Tibial artery (tissue), 4 donors: ENCODE measurements at regions of chr4 and their contacts with region 1.

Region 1: GRCh38 chr4:38319456-38320342 is 344.3 kb upstream of the KLF3 start:
- DNase-seq: peak; percentile 97 to 98
- H3K4me3 ChIP-seq: peak overlapping the region; percentile 30 to 47
- H3K27ac ChIP-seq: peak overlapping the region; percentile 67 to 68
- H3K4me1 ChIP-seq: peaks cover 0 to 33% (median 13%) of the 10 kb centered on the region in 4 donors
- H3K27me3 ChIP-seq: no peaks in the 10 kb centered on the region
- CTCF ChIP-seq: peak; percentile 94 to 96

Region 2: DNA sequence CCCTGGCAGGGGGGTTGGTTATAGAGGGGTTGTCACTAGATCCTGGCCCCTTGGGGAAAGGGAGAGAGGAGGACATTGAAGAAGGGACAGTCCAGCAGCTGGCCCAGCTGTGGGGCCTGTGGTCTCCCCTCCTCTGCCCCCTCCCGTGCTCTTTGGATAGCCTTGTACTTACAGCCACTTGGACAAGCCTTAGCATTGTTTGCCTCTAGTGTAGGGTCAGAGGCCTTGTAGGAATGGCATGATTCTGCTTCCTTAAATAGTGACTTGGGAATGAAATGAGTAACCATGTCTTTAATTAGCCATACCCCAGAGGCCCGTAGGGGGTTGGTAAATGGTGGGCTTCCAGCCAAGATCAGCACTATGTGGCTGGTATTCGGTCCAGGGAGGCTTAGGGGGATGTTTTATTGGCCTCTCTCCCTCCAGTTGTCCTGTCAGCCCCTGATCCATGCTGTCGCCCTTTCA is 129.0 kb before region 1 on chr4:
- intact Hi-C with region 1: loop called (anchors 2 kb)
- DNase-seq: peak; percentile 34 to 87
- H3K4me3 ChIP-seq: no peak overlapping the region
- H3K27ac ChIP-seq: peak overlapping the region; percentile 67 to 75
- H3K4me1 ChIP-seq: peaks cover 0 to 43% (median 35%) of the 10 kb centered on the region in 4 donors
- H3K27me3 ChIP-seq: no peaks in the 10 kb centered on the region
- CTCF ChIP-seq: peak in 1 of 2 experiments; percentile 16

Region 3: DNA sequence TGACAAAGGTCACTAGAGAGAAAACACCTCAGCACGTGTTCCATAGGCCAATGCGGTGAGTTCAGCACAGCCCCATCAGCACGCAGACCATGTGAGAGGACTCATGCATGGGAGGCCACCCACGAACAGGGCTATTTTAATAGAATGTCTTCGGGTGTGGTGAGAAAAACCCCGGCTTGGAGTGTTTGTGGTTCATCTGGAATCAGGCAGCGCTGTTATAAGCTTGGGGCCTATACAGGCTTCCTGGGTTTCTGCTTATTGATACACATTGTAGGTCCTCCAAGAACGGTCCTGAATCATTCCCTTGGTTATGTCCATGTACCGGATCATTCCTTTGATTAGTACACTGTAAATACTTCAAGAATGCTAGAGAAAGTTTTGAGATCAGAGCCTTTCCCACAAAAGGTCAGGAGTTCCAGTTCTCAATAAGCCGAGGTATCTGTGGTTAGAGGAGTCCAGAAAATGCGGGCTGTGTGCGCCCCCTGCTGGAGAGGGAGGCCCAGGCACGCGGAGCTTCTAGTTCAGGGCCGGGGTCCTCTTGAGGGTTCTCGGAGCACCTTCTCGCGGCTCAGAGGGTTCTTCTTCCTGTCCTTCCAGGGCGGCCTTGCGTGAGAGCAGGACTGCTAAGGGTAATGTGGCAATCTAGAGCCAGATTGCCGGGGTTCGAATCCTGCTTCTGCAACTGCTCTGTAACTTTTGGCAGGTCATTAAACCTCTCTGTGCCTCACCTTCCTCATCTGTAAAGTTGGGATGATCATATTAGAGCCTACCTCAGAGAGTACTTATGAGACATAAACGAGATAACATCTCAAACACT is 411.3 kb after region 1 on chr4:
- intact Hi-C with region 1: loop called (anchors 5 kb)
- DNase-seq: peak; percentile 72 to 88
- H3K4me3 ChIP-seq: no peak overlapping the region
- H3K27ac ChIP-seq: no peak overlapping the region
- H3K4me1 ChIP-seq: peaks cover 0 to 6% (median 2%) of the 10 kb centered on the region in 4 donors
- H3K27me3 ChIP-seq: no peaks in the 10 kb centered on the region
- CTCF ChIP-seq: peak; percentile 89